Activated B cell treated with CpG ODN at 0.5 μM for 24 hours (primary cell): ENCODE measurements at regions of chr4 and their contacts with region 1.

Region 1: DNA sequence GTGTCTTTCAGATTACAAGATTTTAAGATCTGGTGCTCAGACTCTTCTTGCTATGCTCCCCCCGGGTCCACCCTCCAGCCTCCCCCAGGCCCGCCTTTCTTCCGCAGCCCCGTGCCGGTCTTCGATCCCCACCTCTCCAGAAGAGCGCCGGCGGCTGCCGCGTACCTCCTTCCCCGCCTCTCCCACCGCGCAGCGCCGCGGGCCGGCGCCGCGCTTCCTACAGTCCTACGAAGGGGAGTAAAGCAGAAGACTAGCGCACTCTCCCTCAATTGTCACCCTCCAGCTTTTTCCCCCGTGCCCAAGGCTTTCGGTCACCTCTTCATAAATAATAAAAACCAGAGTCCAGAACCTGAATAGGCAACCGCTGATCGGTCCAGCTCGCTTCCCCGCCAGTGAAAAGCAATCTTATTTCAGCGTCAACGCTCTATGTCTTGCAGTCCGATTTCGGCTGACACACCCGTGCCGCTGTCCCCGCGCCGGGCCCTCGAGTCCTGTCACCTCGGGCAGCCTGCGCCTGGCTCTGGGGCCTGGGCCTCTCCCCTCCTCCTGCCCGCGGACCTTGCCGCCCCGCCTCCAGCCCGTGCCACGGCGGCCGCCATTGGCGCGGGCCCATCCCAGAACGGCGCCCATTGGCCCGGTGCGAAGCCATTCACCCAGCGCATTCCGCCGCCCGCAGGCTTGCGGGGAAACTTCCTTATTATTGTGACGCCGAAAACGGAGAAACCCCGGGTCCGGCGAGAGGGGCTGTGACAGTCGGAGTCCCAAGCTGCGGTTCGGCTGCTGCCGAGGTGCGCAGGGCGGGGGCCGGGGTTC is at the start of gene HERC3:
- DNase-seq: peak; percentile 87
- ATAC-seq: peak; percentile 93
- H3K4me3 Mint-ChIP-seq: peak within 1 kb of the TSS; percentile 94
- H3K27ac Mint-ChIP-seq: peak within 1 kb of the TSS; percentile 84
- H3K4me1 Mint-ChIP-seq: peaks cover 32% of the 10 kb centered on the region
- H3K27me3 Mint-ChIP-seq: no peaks in the 10 kb centered on the region
- CTCF ChIP-seq: no peak
- total RNA-seq, gene HERC3: 23.8 and 27.5 TPM in 2 replicates

Region 2: GRCh38 chr4:88017516-88018297 is 574.3 kb before region 1 on chr4:
- CTCF ChIA-PET with region 1: no interaction called
- POLR2A ChIA-PET with region 1: no interaction called
- intact Hi-C with region 1: loop called (anchors 10 kb)
- DNase-seq: no peak
- ATAC-seq: no peak
- H3K4me3 Mint-ChIP-seq: no peak overlapping the region
- H3K27ac Mint-ChIP-seq: no peak overlapping the region
- H3K4me1 Mint-ChIP-seq: peaks cover 5% of the 10 kb centered on the region
- H3K27me3 Mint-ChIP-seq: no peaks in the 10 kb centered on the region
- CTCF ChIP-seq: no peak

Region 3: DNA sequence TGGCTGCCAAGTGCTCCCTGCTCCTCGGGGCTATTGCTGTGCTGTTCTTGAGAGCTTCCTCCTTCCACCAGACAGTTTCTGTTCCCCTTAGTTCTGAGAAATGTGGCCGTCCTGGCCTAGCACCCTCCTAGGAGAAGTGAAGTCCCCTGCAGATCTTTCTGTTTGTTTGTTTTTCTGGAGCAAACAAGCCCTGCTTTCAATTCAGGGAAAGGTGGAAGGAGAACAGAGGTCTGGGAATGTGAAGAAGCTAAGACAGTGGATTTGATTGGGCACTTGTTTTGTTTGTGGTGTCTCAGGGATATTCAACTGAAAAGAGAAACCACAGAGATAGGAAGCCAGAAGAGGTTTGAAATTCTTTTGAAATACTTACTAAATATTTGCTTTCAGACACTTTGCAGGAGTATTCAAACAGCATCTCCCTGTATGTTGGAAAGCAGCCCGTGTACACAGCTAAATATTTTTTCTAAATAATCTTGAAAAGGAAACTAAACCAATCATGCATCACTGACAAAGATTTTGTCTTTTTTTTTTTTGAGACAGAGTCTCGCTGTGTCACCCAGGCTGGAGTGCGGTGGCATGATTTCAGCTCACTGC is 271.1 kb before region 1 on chr4:
- CTCF ChIA-PET with region 1: no interaction called
- POLR2A ChIA-PET with region 1: no interaction called
- intact Hi-C with region 1: loop called (anchors 2 kb)
- DNase-seq: peak; percentile 33
- ATAC-seq: peak; percentile 99
- H3K4me3 Mint-ChIP-seq: peak overlapping the region; percentile 80
- H3K27ac Mint-ChIP-seq: peak overlapping the region; percentile 97
- H3K4me1 Mint-ChIP-seq: peaks cover 35% of the 10 kb centered on the region
- H3K27me3 Mint-ChIP-seq: no peaks in the 10 kb centered on the region
- CTCF ChIP-seq: no peak

Region 4: DNA sequence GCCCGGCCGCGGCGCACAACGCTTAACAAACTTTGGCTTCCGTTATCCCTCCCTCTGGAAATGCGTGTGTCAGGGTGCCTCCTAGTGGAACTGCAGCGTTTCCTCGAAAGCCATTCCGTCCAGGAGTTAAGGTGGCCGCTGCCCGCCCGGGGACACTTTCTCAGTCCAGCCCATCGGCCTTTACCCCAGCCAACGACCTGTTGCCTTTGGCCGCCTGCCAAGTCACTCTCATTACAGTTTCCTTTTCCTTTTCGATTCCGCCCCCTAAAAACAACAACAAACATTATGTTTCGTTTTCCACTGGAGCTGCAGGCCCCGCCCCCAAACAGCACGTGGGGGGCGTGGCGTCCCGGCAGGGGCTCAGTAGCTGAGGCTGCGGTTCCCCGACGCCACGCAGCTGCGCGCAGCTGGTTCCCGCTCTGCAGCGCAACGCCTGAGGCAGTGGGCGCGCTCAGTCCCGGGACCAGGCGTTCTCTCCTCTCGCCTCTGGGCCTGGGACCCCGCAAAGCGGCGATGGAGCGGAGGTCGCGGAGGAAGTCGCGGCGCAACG is 135.2 kb before region 1 on chr4 and contains the start of gene HERC5:
- CTCF ChIA-PET with region 1: no interaction called
- POLR2A ChIA-PET with region 1: interaction called, 3 read pairs
- intact Hi-C with region 1: loop called (anchors 1 kb)
- DNase-seq: peak; percentile 84
- ATAC-seq: peak; percentile 96
- H3K4me3 Mint-ChIP-seq: peak within 1 kb of the TSS; percentile 100
- H3K27ac Mint-ChIP-seq: peak within 1 kb of the TSS; percentile 99
- H3K4me1 Mint-ChIP-seq: peaks cover 17% of the 10 kb centered on the region
- H3K27me3 Mint-ChIP-seq: no peaks in the 10 kb centered on the region
- CTCF ChIP-seq: no peak
- total RNA-seq, gene HERC5: 4.2 and 4.8 TPM in 2 replicates

Region 5: DNA sequence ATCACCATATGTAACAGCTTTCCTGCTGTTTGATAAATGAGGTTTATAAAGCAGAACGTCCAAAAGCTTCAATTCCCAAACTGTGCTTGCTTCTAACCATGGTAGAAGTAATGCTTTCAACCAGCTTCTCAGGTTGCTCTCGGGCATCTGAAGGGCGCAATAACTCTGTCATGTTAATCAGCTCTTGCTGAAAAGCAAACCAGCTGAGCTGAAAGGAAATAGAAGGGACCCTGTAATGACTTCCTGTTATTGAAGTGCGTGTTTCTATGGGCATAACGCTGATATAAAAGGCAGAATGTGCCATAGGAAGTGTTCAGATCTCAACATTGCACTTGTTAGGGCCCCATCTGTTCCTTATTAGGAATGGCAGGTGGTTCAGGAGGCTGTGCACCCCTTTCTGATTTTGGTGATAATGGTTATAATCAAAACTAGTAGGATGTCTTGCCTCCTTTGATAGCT is 21.5 kb after region 1 on chr4:
- CTCF ChIA-PET with region 1: no interaction called
- POLR2A ChIA-PET with region 1: interaction called, 18 read pairs
- intact Hi-C with region 1: loop called (anchors 1 kb)
- DNase-seq: no peak
- ATAC-seq: peak; percentile 89
- H3K4me3 Mint-ChIP-seq: peak overlapping the region; percentile 59
- H3K27ac Mint-ChIP-seq: peak overlapping the region; percentile 70
- H3K4me1 Mint-ChIP-seq: peaks cover 76% of the 10 kb centered on the region
- H3K27me3 Mint-ChIP-seq: no peaks in the 10 kb centered on the region
- CTCF ChIP-seq: no peak

Region 6: DNA sequence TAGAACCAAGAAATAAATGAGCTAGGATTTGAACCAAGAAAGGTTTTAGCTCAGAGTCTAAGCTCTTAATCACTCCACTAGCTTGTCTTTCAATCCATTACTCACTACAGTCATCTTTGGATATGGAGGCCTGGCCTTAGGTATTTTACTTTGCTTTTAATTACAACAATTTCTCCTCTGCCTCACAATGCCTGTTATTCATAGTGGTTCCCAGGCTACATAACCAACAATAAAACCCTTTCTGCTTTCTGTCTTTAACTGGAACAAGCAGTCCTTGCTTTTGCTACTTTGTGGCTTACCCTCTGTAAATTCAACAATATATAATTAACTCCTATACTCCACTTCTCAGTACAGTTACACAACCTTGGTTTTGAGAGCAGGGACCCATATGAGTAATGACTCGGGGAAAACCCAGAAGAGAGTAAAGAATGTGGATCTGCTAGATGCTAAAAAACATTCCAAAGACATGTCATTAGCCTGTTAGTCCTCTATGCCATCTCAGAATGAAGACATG is 200.3 kb after region 1 on chr4:
- CTCF ChIA-PET with region 1: no interaction called
- POLR2A ChIA-PET with region 1: no interaction called
- intact Hi-C with region 1: no loop called
- DNase-seq: no peak
- ATAC-seq: no peak
- H3K4me3 Mint-ChIP-seq: no peak overlapping the region
- H3K27ac Mint-ChIP-seq: no peak overlapping the region
- H3K4me1 Mint-ChIP-seq: no peaks in the 10 kb centered on the region
- H3K27me3 Mint-ChIP-seq: no peaks in the 10 kb centered on the region
- CTCF ChIP-seq: no peak

Region 7: DNA sequence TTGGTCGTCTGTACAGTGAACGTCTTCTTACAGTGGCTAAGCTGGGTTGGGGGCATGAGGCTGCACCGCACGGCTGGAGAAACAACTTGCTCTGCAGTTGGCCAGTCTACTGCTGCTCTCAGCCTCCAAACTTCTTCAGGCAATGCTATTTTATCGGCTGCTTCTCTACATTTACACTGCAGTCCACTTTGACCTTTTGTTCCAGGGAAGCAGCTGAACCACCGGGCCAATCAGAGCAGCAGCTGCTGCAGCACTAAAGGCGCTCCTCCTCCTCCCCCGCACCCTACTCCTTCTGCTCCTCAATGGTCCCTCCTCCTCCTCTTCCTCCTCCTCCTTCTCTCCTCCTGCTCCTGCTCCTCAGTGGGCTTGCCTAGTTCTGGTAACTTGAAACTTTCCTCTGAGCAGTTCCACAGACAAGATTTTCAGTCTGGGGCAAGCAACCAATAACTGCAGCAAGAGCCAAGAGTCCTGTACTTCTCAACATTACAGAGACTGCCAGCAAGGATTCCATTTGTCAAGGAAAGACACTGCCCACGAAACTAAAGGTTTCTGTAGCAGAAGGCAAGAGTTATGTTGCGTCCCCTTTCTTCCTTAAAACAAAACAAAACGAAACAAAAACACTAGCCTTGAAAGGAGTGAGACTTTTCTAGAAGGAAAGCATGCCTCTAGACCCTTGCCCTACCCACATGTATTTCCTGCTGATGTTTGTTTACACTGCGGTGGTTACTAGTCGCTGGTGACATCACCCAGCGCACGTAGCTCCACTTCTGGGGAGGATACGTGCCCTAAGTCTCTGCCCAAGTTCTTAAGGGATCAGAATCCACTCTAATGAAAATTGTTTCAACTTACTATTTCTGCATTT is 231.3 kb after region 1 on chr4:
- CTCF ChIA-PET with region 1: no interaction called
- POLR2A ChIA-PET with region 1: no interaction called
- intact Hi-C with region 1: loop called (anchors 2 kb)
- DNase-seq: no peak
- ATAC-seq: peak; percentile 82
- H3K4me3 Mint-ChIP-seq: peak overlapping the region; percentile 83
- H3K27ac Mint-ChIP-seq: peak overlapping the region; percentile 50
- H3K4me1 Mint-ChIP-seq: peaks cover 14% of the 10 kb centered on the region
- H3K27me3 Mint-ChIP-seq: no peaks in the 10 kb centered on the region
- CTCF ChIP-seq: no peak